Motor neuron (in vitro differentiated cells): ENCODE measurements at regions of chr1 and their contacts with region 1.

Region 1: DNA sequence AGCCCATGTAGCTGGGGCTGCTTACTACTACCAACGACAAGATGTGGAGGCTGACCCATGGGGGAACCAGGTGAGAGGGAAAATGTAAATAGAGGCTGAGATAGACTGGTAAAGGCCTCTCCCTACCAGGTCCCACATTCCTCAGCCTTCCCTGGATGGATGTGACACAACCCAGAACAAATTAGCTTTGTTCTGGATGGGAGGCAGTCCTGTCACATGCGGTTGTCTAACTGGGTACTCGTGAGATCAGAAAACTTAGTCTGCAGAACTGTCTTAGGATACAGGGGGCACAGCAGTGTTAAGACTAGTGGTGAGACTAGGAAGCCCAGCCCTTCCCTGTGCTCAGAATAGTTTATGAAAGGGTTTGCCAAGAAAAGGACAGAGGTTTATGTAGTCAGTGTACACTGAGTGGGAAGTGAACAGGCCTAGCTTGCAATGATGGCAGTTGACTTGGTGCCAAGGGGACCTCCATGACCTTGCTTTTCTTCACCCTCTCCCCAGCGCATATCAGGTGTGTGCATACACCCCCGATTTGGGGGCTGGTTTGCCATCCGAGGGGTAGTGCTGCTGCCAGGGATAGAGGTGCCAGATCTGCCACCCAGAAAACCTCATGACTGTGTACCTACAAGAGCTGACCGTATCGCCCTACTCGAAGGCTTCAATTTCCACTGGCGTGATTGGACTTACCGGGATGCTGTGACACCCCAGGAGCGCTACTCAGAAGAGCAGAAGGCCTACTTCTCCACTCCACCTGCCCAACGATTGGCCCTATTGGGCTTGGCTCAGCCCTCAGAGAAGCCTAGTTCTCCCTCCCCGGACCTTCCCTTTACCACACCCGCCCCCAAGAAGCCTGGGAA is 8.4 kb downstream of the MMACHC start:
- ATAC-seq: peak; percentile 14 to 44 (median 34)
- H3K4me3 ChIP-seq: no peak overlapping the region
- H3K27ac ChIP-seq: no peak overlapping the region
- H3K4me1 ChIP-seq: no peaks in the 10 kb centered on the region

Region 2: DNA sequence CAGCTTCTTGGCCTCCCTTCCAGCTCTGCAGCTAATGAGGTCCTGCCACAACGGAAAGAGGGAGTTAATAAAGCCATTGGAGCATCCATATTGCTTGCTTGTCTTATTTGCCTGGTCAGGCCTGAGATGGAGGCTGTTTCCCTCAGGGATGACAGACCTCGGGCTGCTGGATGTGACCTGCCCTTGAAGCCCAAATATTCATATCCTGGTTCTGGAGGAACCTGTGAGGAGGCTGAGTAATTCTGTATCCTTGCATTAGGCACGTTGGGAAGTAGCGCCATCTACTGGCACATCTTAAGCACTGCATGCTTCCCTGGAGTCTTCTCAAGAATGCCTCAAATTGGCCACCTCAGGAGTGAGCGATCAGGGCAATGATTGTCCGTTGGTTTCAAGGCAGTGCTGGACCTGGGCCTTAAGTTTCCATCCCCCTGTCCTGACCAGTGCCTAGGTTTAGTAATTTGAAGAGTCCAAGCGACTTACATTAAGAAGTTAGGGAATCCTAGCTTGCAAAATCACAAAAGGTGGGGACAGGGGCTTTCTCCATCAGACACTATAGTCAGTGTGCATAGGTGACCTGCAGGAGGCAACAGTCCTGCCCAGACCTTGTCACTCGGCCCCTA is 61.5 kb after region 1 on chr1:
- in situ Hi-C with region 1: loop called in 1 of 9 experiments (anchors 10 kb)
- ATAC-seq: peak; percentile 53 to 93 (median 85)
- H3K4me3 ChIP-seq: no peak overlapping the region
- H3K27ac ChIP-seq: no peak overlapping the region
- H3K4me1 ChIP-seq: no peaks in the 10 kb centered on the region